A673 (cell line): ENCODE measurements at regions of chr16 and their contacts with region 1.

Region 1: GRCh38 chr16:14121142-14121541 is 50.0 kb downstream of the MRTFB start:
- DNase-seq: no peak
- H3K4me3 ChIP-seq: no peak overlapping the region
- H3K27ac ChIP-seq: no peak overlapping the region
- H3K4me1 ChIP-seq: peaks cover 7% of the 10 kb centered on the region
- H3K27me3 ChIP-seq: no peaks in the 10 kb centered on the region
- CTCF ChIP-seq: no peak

Region 2: GRCh38 chr16:14098081-14098480 is 23.1 kb before region 1 on chr16:
- CTCF ChIA-PET with region 1: no interaction called
- POLR2A ChIA-PET with region 1: interaction called, 21 read pairs
- intact Hi-C with region 1: no loop called
- DNase-seq: no peak
- H3K4me3 ChIP-seq: no peak overlapping the region
- H3K27ac ChIP-seq: no peak overlapping the region
- H3K4me1 ChIP-seq: no peaks in the 10 kb centered on the region
- H3K27me3 ChIP-seq: no peaks in the 10 kb centered on the region
- CTCF ChIP-seq: no peak